ENCODE measurements at regions of chr1 and their contacts with region 1.

Region 1: DNA sequence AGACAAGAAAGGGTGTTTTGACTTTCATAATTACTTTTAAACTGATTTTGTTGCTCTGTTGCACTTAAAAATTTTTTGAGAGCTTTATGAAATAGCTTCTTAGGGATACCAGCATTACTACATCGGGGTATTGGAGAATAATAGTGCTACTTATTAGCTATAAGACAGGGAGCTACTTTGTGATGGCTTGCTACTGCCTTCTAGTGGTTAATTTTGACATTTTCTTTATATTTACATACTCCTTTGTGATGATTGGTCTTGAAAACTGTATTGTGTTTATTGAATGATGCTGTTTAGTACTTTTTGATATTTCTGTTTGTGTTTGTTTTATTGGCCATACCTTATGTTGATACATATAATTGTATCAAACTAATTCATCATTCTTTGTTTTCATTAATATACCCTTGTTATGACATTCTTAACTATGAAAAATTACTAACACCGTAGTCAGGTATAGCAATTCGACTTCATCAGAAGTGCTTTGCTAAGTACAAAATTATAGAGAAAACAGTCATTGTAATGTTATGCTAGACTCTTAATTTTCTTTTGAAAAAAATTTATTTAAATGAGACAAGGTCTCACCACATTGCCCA is 85.5 kb downstream of the CLIC4 start:
- DNase-seq: peak; percentile 90
- H3K4me3 ChIP-seq: no peak overlapping the region
- H3K27ac ChIP-seq: no peak overlapping the region
- H3K4me1 ChIP-seq: peaks cover 30% of the 10 kb centered on the region
- H3K27me3 ChIP-seq: no peaks in the 10 kb centered on the region
- CTCF ChIP-seq: peak; percentile 42 to 45
- POLR2A ChIP-seq: no peak

Region 2: GRCh38 chr1:24659993-24660665 is 170.6 kb before region 1 on chr1:
- CTCF ChIA-PET with region 1: interaction called, 38 read pairs
- POLR2A ChIA-PET with region 1: interaction called, 3 read pairs
- dilution Hi-C with region 1: no loop called
- intact Hi-C with region 1: no loop called
- DNase-seq: no peak
- H3K4me3 ChIP-seq: no peak overlapping the region
- H3K27ac ChIP-seq: no peak overlapping the region
- H3K4me1 ChIP-seq: no peaks in the 10 kb centered on the region
- H3K27me3 ChIP-seq: no peaks in the 10 kb centered on the region
- CTCF ChIP-seq: no peak
- POLR2A ChIP-seq: no peak

Region 3: GRCh38 chr1:24673336-24673735 is 157.4 kb before region 1 on chr1:
- CTCF ChIA-PET with region 1: interaction called, 33 read pairs
- POLR2A ChIA-PET with region 1: no interaction called
- dilution Hi-C with region 1: no loop called
- intact Hi-C with region 1: no loop called
- DNase-seq: no peak
- H3K4me3 ChIP-seq: no peak overlapping the region
- H3K27ac ChIP-seq: no peak overlapping the region
- H3K4me1 ChIP-seq: no peaks in the 10 kb centered on the region
- H3K27me3 ChIP-seq: no peaks in the 10 kb centered on the region
- CTCF ChIP-seq: no peak
- POLR2A ChIP-seq: no peak

Region 4: DNA sequence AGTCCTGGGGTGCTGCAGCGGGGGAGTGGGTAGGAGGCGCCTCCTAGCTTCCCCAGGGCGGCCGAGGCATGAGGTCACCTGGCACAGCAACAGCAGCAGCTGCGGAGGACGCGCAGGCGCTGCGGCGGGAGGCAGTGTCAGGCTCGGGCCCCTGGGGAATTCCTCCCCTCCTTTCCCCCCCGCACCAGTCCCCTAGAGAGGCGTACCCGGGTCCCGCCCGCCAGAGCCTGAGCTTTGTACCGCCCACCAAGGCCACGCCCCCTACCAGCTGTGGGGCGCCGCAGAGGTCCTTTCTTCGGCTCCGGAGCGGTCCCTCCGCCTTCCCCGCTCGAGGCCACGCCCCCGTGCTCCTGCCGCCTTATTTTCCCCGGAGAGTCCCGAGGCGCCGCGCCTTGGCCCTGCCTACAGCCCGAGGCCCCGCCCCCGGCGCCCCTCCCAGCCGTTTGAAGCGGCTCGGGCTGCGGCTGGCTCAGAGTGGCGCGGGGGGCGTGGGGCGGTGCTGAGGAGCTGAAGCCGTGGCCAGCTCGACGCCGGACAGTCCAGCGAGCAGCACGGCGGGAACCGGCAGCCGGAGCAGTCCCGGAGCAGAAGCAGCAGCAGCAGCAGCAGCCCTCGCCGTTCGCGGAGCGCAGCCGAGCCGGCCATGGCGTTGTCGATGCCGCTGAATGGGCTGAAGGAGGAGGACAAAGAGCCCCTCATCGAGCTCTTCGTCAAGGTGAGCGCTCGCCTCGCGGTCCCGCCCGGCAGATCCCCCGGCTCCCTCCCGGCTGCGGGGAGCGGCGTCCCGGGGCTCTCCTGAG is 85.7 kb before region 1 on chr1 and contains the start of gene CLIC4:
- CTCF ChIA-PET with region 1: interaction called, 70 read pairs
- POLR2A ChIA-PET with region 1: interaction called, 14 read pairs
- dilution Hi-C with region 1: no loop called
- intact Hi-C with region 1: loop called (anchors 2 kb)
- DNase-seq: peak; percentile 100
- H3K4me3 ChIP-seq: peak within 1 kb of the TSS; percentile 75 to 96 (median 79)
- H3K27ac ChIP-seq: peak within 1 kb of the TSS; percentile 85
- H3K4me1 ChIP-seq: peaks cover 32% of the 10 kb centered on the region
- H3K27me3 ChIP-seq: no peaks in the 10 kb centered on the region
- CTCF ChIP-seq: no peak
- POLR2A ChIP-seq: peak; percentile 98
- total RNA-seq, gene CLIC4: 330 and 333 TPM in 2 replicates

Region 5: GRCh38 chr1:24769656-24770651 is 60.8 kb before region 1 on chr1:
- CTCF ChIA-PET with region 1: interaction called, 14 read pairs
- POLR2A ChIA-PET with region 1: no interaction called
- dilution Hi-C with region 1: no loop called
- intact Hi-C with region 1: no loop called
- DNase-seq: peak; percentile 92
- H3K4me3 ChIP-seq: no peak overlapping the region
- H3K27ac ChIP-seq: peak overlapping the region; percentile 96
- H3K4me1 ChIP-seq: peaks cover 54% of the 10 kb centered on the region
- H3K27me3 ChIP-seq: no peaks in the 10 kb centered on the region
- CTCF ChIP-seq: no peak
- POLR2A ChIP-seq: peak; percentile 52

Region 6: GRCh38 chr1:24805534-24806301 is 25.1 kb before region 1 on chr1:
- CTCF ChIA-PET with region 1: interaction called, 15 read pairs
- POLR2A ChIA-PET with region 1: no interaction called
- dilution Hi-C with region 1: no loop called
- intact Hi-C with region 1: no loop called
- DNase-seq: peak; percentile 95
- H3K4me3 ChIP-seq: peak overlapping the region in 1 of 3 experiments; percentile 52
- H3K27ac ChIP-seq: peak overlapping the region; percentile 86
- H3K4me1 ChIP-seq: peaks cover 61% of the 10 kb centered on the region
- H3K27me3 ChIP-seq: no peaks in the 10 kb centered on the region
- CTCF ChIP-seq: no peak
- POLR2A ChIP-seq: peak; percentile 34

Region 7: DNA sequence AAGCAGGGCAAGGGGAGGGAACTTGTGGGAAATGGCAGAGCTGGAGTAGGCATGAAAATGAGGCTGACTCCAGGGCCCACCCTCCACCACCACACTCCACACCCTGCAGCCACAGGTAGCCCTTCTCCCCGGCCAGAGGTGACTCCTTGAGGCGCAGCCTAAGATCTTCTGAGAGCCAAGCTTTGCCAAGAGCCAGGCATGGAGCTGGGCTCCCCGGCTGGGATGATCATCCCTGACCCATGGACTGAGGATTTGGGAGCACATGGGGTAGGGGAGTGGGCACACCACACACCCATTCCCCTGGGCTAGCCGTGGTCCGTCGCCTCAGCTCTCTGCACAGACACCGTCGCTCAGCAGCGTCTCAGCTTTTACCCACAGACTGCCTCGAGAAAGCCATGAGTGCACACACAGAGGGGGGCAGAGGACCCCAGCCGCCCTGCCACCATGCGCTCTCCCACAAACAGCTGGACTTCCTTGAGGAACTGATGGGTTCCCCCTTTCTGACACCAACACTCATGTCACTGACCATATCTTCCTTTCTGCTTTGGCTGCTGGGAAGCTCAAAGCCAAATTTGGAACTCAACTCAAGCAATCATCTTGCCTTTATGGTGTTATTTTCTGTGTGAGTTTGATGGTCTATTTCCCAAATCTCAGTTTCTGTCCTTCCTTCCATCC is 222.9 kb after region 1 on chr1:
- CTCF ChIA-PET with region 1: no interaction called
- POLR2A ChIA-PET with region 1: no interaction called
- dilution Hi-C with region 1: no loop called
- intact Hi-C with region 1: no loop called
- DNase-seq: no peak
- H3K4me3 ChIP-seq: no peak overlapping the region
- H3K27ac ChIP-seq: no peak overlapping the region
- H3K4me1 ChIP-seq: no peaks in the 10 kb centered on the region
- H3K27me3 ChIP-seq: no peaks in the 10 kb centered on the region
- CTCF ChIP-seq: no peak
- POLR2A ChIP-seq: no peak

Measured in endothelial cell of umbilical vein (primary cell).